Activated B cell treated with CpG ODN at 0.5 μM for 24 hours (primary cell): ENCODE measurements at regions of chr6 and their contacts with region 1.

Region 1: GRCh38 chr6:13767121-13767808 is 47.1 kb downstream of the MCUR1 start:
- DNase-seq: no peak
- ATAC-seq: peak; percentile 49
- H3K4me3 Mint-ChIP-seq: peak overlapping the region; percentile 81
- H3K27ac Mint-ChIP-seq: no peak overlapping the region
- H3K4me1 Mint-ChIP-seq: peaks cover 45% of the 10 kb centered on the region
- H3K27me3 Mint-ChIP-seq: no peaks in the 10 kb centered on the region
- CTCF ChIP-seq: no peak

Region 2: DNA sequence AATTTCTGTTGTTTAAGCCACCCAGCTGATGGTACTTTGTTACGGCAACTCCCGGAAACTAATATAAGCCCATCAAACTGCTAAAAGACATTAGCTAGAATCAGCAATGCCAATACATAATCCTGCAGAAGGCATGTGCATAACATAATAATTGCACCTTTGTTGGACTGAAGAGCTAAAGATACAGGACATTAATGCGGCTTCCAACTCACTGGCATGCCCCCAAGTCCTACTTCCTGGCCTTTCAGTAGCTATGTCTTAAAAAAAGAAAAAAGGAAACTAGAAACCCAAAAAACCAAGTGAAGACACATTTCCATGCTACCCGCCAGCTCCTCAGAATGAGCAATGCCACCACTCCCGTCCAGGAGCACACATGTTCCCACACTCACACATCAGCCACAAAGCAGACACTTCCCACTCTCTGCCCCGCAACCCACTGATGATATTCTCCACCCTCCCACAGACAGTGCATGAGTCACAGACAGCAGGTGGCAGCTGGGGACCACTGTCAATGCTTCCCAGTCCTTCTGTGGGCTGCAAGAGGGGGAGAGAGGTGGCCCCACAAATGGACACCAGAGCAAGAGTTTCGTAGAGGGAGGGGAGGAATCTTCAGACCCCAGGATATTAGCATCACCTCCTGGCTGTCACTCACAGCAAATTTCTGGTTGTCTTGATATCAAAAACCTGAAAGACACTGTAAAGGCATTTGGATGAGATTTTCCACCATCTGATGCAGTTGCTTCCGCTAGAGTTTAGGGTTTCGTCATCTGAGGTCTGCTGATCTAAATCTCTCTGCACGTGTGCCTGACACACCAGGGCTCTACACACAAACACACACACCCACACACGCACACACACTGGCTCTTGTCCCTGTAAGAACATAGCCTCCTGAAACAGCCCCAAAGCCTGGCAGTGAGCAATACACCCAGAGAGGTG is 312.7 kb before region 1 on chr6:
- CTCF ChIA-PET with region 1: no interaction called
- POLR2A ChIA-PET with region 1: no interaction called
- intact Hi-C with region 1: no loop called
- DNase-seq: peak; percentile 37
- ATAC-seq: peak; percentile 81
- H3K4me3 Mint-ChIP-seq: peak overlapping the region; percentile 65
- H3K27ac Mint-ChIP-seq: peak overlapping the region; percentile 85
- H3K4me1 Mint-ChIP-seq: peaks cover 60% of the 10 kb centered on the region
- H3K27me3 Mint-ChIP-seq: no peaks in the 10 kb centered on the region
- CTCF ChIP-seq: no peak

Region 3: GRCh38 chr6:13742961-13743735 is 24.1 kb before region 1 on chr6:
- CTCF ChIA-PET with region 1: no interaction called
- POLR2A ChIA-PET with region 1: interaction called, 10 read pairs
- intact Hi-C with region 1: loop called (anchors 2 kb)
- DNase-seq: no peak
- ATAC-seq: no peak
- H3K4me3 Mint-ChIP-seq: peak overlapping the region; percentile 53
- H3K27ac Mint-ChIP-seq: no peak overlapping the region
- H3K4me1 Mint-ChIP-seq: no peaks in the 10 kb centered on the region
- H3K27me3 Mint-ChIP-seq: no peaks in the 10 kb centered on the region
- CTCF ChIP-seq: no peak

Region 4: GRCh38 chr6:14910692-14911547 is 1143.7 kb after region 1 on chr6:
- CTCF ChIA-PET with region 1: no interaction called
- POLR2A ChIA-PET with region 1: no interaction called
- intact Hi-C with region 1: loop called (anchors 5 kb)
- DNase-seq: peak; percentile 34
- ATAC-seq: peak; percentile 92
- H3K4me3 Mint-ChIP-seq: peak overlapping the region; percentile 70
- H3K27ac Mint-ChIP-seq: peak overlapping the region; percentile 88
- H3K4me1 Mint-ChIP-seq: peaks cover 41% of the 10 kb centered on the region
- H3K27me3 Mint-ChIP-seq: no peaks in the 10 kb centered on the region
- CTCF ChIP-seq: no peak